Right cardiac atrium (tissue), 5 donors: ENCODE measurements at regions of chr9 and their contacts with region 1.

Region 1: DNA sequence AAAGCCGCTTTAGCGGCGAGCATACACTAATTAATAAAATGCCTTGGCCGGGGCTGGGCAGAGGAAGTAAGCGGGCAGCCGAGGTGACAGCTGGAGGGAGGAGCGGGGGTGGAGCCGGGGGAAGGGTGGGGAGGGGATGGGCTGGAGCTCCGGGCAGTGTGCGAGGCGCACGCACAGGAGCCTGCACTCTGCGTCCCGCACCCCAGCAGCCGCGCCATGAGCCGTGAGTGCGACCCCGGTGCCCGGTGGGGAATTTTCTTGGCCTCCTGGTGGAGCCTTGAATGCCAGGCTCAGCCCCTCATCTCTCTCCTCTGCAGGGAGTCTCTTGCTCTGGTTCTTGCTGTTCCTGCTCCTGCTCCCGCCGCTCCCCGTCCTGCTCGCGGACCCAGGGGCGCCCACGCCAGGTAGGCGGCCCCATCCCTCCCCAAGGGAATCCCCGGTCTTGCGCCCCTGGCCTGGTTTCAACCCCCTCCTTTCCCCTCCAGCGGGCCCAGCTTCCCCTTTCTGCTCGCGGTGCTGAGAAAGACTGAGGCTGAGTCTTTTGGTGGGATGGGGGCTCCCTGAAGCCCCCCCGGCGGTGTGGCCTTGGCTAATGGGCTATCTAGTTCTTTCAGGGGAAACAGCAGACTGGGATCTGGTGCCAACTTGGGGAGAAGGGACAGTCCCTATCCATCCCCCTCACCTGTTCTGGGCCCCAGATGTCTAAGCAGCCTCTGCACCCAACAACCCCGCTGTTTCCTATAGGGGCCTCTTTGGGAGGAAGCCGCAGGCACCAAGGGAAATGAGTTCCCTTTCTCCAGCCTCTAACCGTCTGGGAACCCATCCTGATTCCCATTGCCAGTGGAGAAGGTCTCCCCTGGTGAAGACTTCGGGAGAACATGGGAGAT is at the start of gene PTGS1:
- DNase-seq: peak; percentile 65 to 85 (median 85)
- ATAC-seq: peak; percentile 76 to 80
- H3K4me3 ChIP-seq: peak within 1 kb of the TSS; percentile 38
- H3K27ac ChIP-seq: no peak within 1 kb of the TSS
- H3K4me1 ChIP-seq: no peaks in the 10 kb centered on the region
- H3K27me3 ChIP-seq: no peaks in the 10 kb centered on the region
- total RNA-seq, gene PTGS1: 11.7 to 29.2 (median 22.6) TPM

Region 2: DNA sequence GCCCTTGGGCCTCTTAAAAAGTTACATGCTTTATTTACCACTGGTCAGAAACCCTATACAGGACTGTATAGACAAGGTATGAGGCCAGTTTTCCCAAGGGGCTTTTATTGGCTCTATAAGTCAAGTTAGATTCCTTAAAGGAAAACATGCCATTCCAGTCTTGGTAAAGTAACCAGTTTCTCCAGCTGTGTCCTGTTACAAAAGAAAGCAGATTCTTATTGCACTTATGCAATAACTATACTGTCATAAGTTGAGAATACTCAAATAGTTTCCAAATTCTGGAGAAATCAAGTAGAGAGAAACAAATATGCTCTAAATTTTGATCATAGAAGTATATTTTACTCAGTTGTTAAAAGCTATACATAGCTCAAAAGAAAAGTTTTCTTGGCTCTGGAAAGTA is 46.9 kb after region 1 on chr9:
- intact Hi-C with region 1: no loop called
- DNase-seq: no peak
- ATAC-seq: no peak
- H3K4me3 ChIP-seq: no peak overlapping the region
- H3K27ac ChIP-seq: no peak overlapping the region
- H3K4me1 ChIP-seq: no peaks in the 10 kb centered on the region
- H3K27me3 ChIP-seq: no peaks in the 10 kb centered on the region

Region 3: GRCh38 chr9:122453677-122454135 is 82.6 kb after region 1 on chr9:
- intact Hi-C with region 1: loop called in 1 of 4 experiments (anchors 10 kb)
- DNase-seq: no peak
- ATAC-seq: peak in 1 of 2 donors; percentile 80
- H3K4me3 ChIP-seq: no peak overlapping the region
- H3K27ac ChIP-seq: no peak overlapping the region
- H3K4me1 ChIP-seq: no peaks in the 10 kb centered on the region
- H3K27me3 ChIP-seq: no peaks in the 10 kb centered on the region